Endothelial cell of umbilical vein (primary cell): ENCODE measurements at regions of chr20 and their contacts with region 1.

Region 1: GRCh38 chr20:45798935-45799642 is 7.3 kb downstream of the DNTTIP1 start:
- DNase-seq: peak; percentile 57
- H3K4me3 ChIP-seq: no peak overlapping the region
- H3K27ac ChIP-seq: no peak overlapping the region
- H3K4me1 ChIP-seq: no peaks in the 10 kb centered on the region
- H3K27me3 ChIP-seq: no peaks in the 10 kb centered on the region
- CTCF ChIP-seq: peak; percentile 69 to 85
- POLR2A ChIP-seq: no peak

Region 2: GRCh38 chr20:44966030-44966961 is 832.8 kb before region 1 on chr20 and contains the start of gene STK4:
- CTCF ChIA-PET with region 1: no interaction called
- POLR2A ChIA-PET with region 1: no interaction called
- dilution Hi-C with region 1: no loop called
- intact Hi-C with region 1: loop called (anchors 10 kb)
- DNase-seq: peak; percentile 95
- H3K4me3 ChIP-seq: peak within 1 kb of the TSS; percentile 59 to 92 (median 64)
- H3K27ac ChIP-seq: peak within 1 kb of the TSS; percentile 44
- H3K4me1 ChIP-seq: peaks cover 50% of the 10 kb centered on the region
- H3K27me3 ChIP-seq: no peaks in the 10 kb centered on the region
- CTCF ChIP-seq: peak; percentile 46 to 67
- POLR2A ChIP-seq: peak; percentile 49
- total RNA-seq, gene STK4: 28.2 and 29.6 TPM in 2 replicates

Region 3: GRCh38 chr20:45735552-45735951 is 63.5 kb before region 1 on chr20:
- CTCF ChIA-PET with region 1: no interaction called
- POLR2A ChIA-PET with region 1: no interaction called
- dilution Hi-C with region 1: no loop called
- intact Hi-C with region 1: no loop called
- DNase-seq: no peak
- H3K4me3 ChIP-seq: no peak overlapping the region
- H3K27ac ChIP-seq: no peak overlapping the region
- H3K4me1 ChIP-seq: no peaks in the 10 kb centered on the region
- H3K27me3 ChIP-seq: no peaks in the 10 kb centered on the region
- CTCF ChIP-seq: no peak
- POLR2A ChIP-seq: no peak

Region 4: DNA sequence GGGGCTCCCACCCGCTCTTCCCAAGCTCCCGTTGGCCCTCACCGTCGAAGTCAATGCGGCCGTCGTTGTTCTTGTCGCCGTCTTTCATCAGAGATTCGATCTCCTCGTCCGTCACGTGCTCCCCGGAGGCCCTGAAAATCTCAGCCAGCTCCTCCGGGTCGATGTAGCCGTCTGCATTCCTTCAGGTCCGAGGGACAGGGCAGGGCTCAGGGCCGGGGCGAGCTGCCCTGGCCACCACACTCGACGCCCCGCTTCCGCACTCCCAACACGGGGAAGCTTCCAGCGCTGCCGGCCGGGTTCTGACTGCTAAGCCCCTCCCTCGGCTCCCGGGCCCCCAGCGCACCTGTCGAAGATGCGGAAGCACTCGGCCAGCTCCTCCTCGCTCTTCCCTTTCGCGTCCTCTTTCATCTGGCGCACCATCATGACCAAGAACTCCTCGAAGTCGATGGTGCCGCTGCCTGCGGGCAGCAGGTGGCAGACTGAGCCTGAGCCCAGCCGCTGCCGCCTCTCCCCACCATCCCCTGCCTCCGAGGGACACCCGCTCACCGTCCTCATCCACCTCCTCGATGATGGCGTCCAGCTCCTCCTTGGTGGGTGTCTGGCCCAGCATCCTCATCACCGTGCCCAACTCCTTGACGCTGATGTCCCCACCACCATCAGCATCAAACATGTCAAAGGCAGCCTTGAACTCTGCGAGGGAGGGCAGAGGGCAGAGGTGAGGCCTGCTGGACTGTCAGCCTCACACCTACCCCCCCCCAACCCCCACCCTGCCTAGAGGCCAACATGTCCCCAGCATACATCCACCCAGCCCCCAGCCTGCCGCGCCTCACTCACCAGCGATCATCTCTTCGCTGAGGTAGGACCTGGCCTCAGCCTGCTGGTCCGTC is 25.1 kb after region 1 on chr20:
- CTCF ChIA-PET with region 1: interaction called, 13 read pairs
- POLR2A ChIA-PET with region 1: no interaction called
- dilution Hi-C with region 1: no loop called
- intact Hi-C with region 1: no loop called
- DNase-seq: peak; percentile 46
- H3K4me3 ChIP-seq: peak overlapping the region in 1 of 3 experiments; percentile 17
- H3K27ac ChIP-seq: no peak overlapping the region
- H3K4me1 ChIP-seq: peaks cover 4% of the 10 kb centered on the region
- H3K27me3 ChIP-seq: peaks cover 11 to 16% of the 10 kb centered on the region in 2 experiments
- CTCF ChIP-seq: peak; percentile 40 to 75
- POLR2A ChIP-seq: no peak

Region 5: DNA sequence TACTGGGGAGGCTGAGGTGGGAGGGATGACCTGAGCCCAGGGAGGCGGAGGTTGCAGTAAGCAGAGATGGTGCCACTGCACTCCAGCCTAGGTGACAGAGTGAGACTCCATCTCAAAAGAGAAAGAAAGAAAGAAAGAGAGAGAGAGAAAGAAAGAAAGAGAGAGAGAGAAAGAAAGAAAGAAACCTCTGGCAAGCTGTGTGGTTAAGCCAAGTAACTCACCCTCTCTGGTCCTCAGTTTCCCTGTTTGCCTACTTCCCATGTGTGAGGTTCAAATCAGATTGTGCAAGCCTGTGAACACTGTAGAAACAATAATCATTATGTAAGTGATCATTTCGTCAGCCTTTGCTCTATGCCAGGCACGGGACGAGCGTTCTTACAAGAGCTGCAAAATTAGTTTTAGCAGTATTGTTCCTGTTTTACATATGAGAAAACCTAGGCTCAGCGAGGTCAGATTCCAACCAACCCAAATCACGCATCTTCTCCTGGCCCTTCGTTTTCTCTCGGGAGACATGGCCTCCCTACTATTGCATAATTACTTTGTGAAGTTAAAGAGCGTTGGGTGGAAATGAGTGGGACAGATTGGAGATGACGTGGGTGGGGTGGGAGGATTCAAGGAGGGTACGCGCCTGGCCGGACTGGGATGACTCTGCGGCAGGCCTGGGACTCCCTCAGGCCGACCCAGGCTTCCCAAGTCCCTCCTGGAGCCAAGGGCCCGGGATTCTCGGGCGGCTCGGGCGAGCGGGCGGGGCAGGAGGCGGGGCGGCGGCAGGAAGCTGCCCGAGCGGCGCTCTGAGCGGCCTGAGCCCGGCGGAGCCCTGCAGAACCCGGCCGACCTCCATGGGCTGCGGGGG is 34.2 kb after region 1 on chr20 and contains the start of gene SNX21:
- CTCF ChIA-PET with region 1: interaction called, 11 read pairs
- POLR2A ChIA-PET with region 1: no interaction called
- dilution Hi-C with region 1: no loop called
- intact Hi-C with region 1: no loop called
- DNase-seq: peak; percentile 78
- H3K4me3 ChIP-seq: peak within 1 kb of the TSS; percentile 35 to 64 (median 47)
- H3K27ac ChIP-seq: peak within 1 kb of the TSS; percentile 71
- H3K4me1 ChIP-seq: peaks cover 20% of the 10 kb centered on the region
- H3K27me3 ChIP-seq: no peaks in the 10 kb centered on the region
- CTCF ChIP-seq: no peak
- POLR2A ChIP-seq: no peak
- total RNA-seq, gene SNX21: 11.9 and 14.9 TPM in 2 replicates

Region 6: DNA sequence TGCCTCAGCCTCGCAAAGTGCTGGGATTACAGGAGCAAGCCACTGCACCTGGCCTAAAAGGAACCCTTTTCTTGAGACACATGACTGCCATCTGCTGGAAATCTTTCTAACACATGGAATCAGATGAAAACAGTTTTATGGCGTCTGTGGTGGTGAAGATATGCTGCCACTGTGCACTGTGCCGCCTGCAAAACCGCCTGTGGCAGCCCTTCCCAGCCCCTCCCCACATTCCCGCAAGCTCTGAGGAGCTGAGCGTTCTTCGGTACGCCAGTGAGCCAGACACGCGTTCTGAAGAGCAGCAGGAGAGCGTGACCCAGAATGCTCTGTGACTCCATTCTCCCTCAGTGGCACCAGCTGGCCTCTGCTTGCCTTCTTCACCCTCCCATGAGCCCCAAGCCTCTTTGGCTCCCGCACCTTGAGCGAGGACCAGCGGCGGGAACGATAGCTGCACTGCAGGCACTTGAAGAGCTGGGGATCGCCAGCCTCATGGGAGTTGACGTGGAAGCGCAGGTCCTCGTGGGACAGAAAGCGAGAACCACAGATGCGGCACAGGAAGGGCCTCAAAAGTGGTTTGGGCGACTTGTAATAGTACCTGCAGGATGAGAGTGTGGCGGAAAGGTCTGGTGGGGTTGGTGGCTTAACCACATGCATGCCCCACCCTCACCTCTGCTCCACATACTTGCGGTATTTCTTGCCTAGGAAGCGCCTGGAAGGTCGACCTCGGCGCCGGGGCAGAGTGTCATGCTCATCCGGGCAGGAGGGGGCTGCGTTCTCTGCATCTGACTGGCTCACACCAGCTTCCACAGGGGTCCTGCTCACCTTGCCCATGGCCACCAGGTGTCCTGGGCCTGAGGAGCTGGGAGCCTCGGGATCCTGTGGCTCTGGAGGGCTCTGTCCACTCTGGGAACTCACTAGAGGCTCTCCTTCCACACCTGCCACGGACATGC is 164.2 kb after region 1 on chr20:
- CTCF ChIA-PET with region 1: interaction called, 29 read pairs
- POLR2A ChIA-PET with region 1: no interaction called
- dilution Hi-C with region 1: no loop called
- intact Hi-C with region 1: loop called (anchors 1 kb)
- DNase-seq: peak; percentile 36
- H3K4me3 ChIP-seq: no peak overlapping the region
- H3K27ac ChIP-seq: no peak overlapping the region
- H3K4me1 ChIP-seq: no peaks in the 10 kb centered on the region
- H3K27me3 ChIP-seq: no peaks in the 10 kb centered on the region
- CTCF ChIP-seq: peak; percentile 24 to 25
- POLR2A ChIP-seq: no peak

Region 7: DNA sequence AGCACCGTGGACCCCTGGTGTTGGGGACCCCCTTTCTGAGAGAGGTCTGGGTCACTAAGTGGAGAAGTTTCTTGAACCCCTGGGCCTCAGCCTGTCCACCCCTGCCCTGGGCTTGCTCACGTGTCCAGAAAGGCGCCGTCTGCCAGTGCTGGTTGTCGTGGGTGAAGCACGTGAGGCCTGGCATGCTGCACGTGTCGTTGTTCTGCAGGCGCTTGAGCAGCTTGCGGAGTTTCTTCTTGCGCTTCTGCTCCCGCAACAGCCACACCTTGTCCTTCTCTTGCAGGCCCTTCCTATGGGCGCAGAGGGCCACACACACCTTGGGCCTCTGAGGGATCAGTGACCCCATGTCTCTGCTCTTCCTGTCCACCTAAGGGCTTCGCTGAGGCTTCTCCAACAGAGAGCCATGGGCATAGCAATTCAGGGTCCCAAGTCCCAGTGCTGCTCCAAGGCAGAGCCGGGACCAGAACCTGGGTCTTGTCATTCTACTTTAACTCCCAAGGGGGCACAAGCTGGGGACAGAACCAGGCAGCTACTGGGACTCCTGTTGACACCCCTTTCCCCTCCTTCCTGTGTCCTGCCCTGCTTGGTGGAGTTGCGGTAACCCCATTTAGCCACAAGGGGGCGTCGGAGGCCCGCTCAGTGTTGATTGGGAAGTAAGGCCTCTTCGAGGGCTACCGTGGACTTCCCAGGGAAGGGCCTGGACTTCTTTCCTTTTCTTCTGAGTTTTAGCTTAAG is 1864.4 kb after region 1 on chr20:
- CTCF ChIA-PET with region 1: no interaction called
- POLR2A ChIA-PET with region 1: no interaction called
- dilution Hi-C with region 1: no loop called
- intact Hi-C with region 1: no loop called
- DNase-seq: peak; percentile 79
- H3K4me3 ChIP-seq: no peak overlapping the region
- H3K27ac ChIP-seq: no peak overlapping the region
- H3K4me1 ChIP-seq: peaks cover 7% of the 10 kb centered on the region
- H3K27me3 ChIP-seq: no peaks in the 10 kb centered on the region
- CTCF ChIP-seq: peak; percentile 94 to 96
- POLR2A ChIP-seq: no peak